Body of pancreas (tissue), 4 donors: ENCODE measurements at regions of chr4 and their contacts with region 1.

Region 1: GRCh38 chr4:2186133-2186864 is 55.6 kb downstream of the HAUS3 start:
- DNase-seq: peak; percentile 45 to 67 (median 62)
- ATAC-seq: peak; percentile 81
- H3K4me3 ChIP-seq: no peak overlapping the region
- H3K27ac ChIP-seq: no peak overlapping the region
- H3K4me1 ChIP-seq: no peaks in the 10 kb centered on the region
- H3K27me3 ChIP-seq: no peaks in the 10 kb centered on the region
- CTCF ChIP-seq: peak; percentile 40 to 84 (median 78)
- POLR2A ChIP-seq: no peak

Region 2: GRCh38 chr4:1910643-1911042 is 275.7 kb before region 1 on chr4:
- intact Hi-C with region 1: loop called (anchors 5 kb)
- DNase-seq: peak; percentile 22 to 57 (median 36)
- ATAC-seq: no peak
- H3K4me3 ChIP-seq: no peak overlapping the region
- H3K27ac ChIP-seq: no peak overlapping the region
- H3K4me1 ChIP-seq: peaks cover 4% of the 10 kb centered on the region
- H3K27me3 ChIP-seq: no peaks in the 10 kb centered on the region
- CTCF ChIP-seq: peak in 5 of 7 experiments; percentile 32 to 51 (median 45)
- POLR2A ChIP-seq: no peak